ENCODE measurements at regions of chr11 and their contacts with region 1.

Region 1: DNA sequence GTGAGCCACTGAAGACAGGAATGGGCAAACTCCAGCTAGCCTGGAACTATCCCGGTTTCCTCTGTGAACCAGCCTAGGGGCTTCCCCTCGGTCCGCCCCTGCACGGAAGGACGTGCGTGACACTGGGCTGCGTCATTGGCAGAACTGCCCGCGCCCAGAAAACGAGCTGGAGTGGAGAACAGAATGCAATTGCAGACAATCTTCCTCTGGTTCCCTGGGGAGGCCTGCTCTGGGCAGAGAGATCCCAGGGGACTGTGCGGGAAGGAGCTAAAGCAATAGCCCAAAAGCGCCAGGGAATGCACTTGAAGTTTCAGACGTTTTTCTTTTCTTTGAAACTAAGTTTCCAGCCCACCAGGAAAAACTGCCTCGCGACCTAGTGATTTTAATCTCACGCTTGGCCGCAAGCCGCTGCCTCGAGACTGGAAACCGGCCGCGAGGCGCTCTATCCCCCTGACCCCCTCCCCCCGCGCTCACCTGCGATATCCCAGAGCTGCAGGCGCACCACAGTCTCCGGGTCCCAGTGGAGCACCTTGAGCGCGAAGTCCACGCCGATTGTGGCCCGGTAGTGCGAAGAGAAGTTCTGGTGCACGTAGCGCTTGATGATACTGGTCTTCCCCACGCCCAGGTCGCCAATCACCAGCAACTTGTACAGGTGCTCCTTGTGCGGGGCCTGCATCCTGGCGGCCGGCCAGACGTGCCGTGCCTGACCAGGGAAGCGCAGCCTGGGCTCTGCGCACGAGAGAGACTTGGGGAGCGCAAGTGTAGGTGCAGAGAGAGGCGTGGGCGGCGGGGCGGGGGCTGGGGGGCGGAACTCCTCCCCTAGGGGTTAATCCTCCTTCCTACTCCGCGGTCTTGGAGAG is at the start of gene RAB38:
- DNase-seq: no peak
- ATAC-seq: peak; percentile 71
- H3K4me3 ChIP-seq: peak within 1 kb of the TSS; percentile 72
- H3K27ac ChIP-seq: no peak within 1 kb of the TSS
- H3K4me1 ChIP-seq: peaks cover 23% of the 10 kb centered on the region
- H3K27me3 ChIP-seq: no peaks in the 10 kb centered on the region
- CTCF ChIP-seq: no peak
- EP300 ChIP-seq: peak in 1 of 2 experiments; percentile 5; a peak in 1 of 4 replicates
- POLR2A ChIP-seq: peak; percentile 46; the same call in 1 of the 2 replicates
- RAD21 ChIP-seq: no peak
- polyA plus RNA-seq, gene RAB38: 12.3 to 19.0 TPM

Region 2: GRCh38 chr11:88117281-88117858 is 57.6 kb before region 1 on chr11:
- CTCF ChIA-PET with region 1: no interaction called
- POLR2A ChIA-PET with region 1: no interaction called
- RAD21 ChIA-PET with region 1: no interaction called
- SMC1A ChIA-PET with region 1: interaction called, 4 read pairs
- in situ Hi-C with region 1: no loop called
- intact Hi-C with region 1: loop called (anchors 5 kb)
- DNase-seq: no peak
- ATAC-seq: peak; percentile 87
- H3K4me3 ChIP-seq: no peak overlapping the region
- H3K27ac ChIP-seq: no peak overlapping the region
- H3K4me1 ChIP-seq: peaks cover 5% of the 10 kb centered on the region; the same call in 1 of the 2 replicates
- H3K27me3 ChIP-seq: no peaks in the 10 kb centered on the region; a peak in 1 of 4 replicates
- CTCF ChIP-seq: no peak
- EP300 ChIP-seq: no peak
- POLR2A ChIP-seq: no peak
- RAD21 ChIP-seq: no peak

Region 3: GRCh38 chr11:88194990-88195389 is 20.1 kb after region 1 on chr11:
- CTCF ChIA-PET with region 1: interaction called, 7 read pairs
- POLR2A ChIA-PET with region 1: interaction called, 4 read pairs
- RAD21 ChIA-PET with region 1: interaction called, 4 read pairs
- SMC1A ChIA-PET with region 1: interaction called, 23 read pairs
- in situ Hi-C with region 1: no loop called
- intact Hi-C with region 1: loop called (anchors 1 kb)
- DNase-seq: no peak
- ATAC-seq: peak; percentile 93
- H3K4me3 ChIP-seq: no peak overlapping the region
- H3K27ac ChIP-seq: no peak overlapping the region
- H3K4me1 ChIP-seq: peaks cover 22% of the 10 kb centered on the region
- H3K27me3 ChIP-seq: no peaks in the 10 kb centered on the region
- CTCF ChIP-seq: no peak
- EP300 ChIP-seq: 0 out of 4 replicates have a peak, but pooled peaks have one; percentile 28 to 52
- POLR2A ChIP-seq: no peak
- RAD21 ChIP-seq: no peak

Region 4: DNA sequence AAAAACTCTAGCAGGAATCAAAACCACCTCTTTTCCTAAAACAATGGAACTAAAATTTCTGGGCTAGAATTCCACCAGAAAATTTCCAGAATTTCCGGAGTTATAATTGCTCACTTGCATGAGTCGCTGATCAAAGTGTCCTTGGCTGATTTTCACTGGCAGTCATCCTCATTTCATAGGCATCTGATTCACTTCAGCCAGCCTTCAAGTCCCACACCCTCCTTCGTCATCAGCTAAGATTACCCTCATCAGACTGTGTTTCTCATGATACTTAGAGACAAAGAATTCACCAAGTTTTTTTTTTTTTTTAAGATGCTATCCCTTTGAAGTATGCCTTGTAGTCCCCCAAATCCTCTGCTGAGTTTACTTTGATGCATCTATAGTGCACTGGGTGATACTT is 71.8 kb after region 1 on chr11:
- CTCF ChIA-PET with region 1: no interaction called
- POLR2A ChIA-PET with region 1: no interaction called
- RAD21 ChIA-PET with region 1: no interaction called
- SMC1A ChIA-PET with region 1: no interaction called
- in situ Hi-C with region 1: no loop called
- intact Hi-C with region 1: no loop called
- DNase-seq: no peak
- ATAC-seq: no peak
- H3K4me3 ChIP-seq: no peak overlapping the region
- H3K27ac ChIP-seq: no peak overlapping the region
- H3K4me1 ChIP-seq: no peaks in the 10 kb centered on the region
- H3K27me3 ChIP-seq: no peaks in the 10 kb centered on the region
- CTCF ChIP-seq: no peak
- EP300 ChIP-seq: no peak
- POLR2A ChIP-seq: no peak
- RAD21 ChIP-seq: no peak

Measured in GM12878 (cell line).